ENCODE measurements at regions of chr2 and their contacts with region 1.

Region 1: GRCh38 chr2:74391580-74392448 is 11.7 kb upstream of the DCTN1 start:
- DNase-seq: peak; percentile 92 to 96 (median 94)
- H3K4me3 ChIP-seq: peak overlapping the region; percentile 84 to 90
- H3K4me3 Mint-ChIP-seq: peak overlapping the region in 5 of 8 donors; percentile 96 to 99 (median 97)
- H3K27ac ChIP-seq: peak overlapping the region; percentile 88
- H3K27ac Mint-ChIP-seq: peak overlapping the region in 6 of 7 donors; percentile 99 to 100 (median 100)
- H3K4me1 ChIP-seq: peaks cover 27% of the 10 kb centered on the region
- H3K4me1 Mint-ChIP-seq: peaks cover 5 to 13% (median 6%) of the 10 kb centered on the region in 4 donors
- H3K27me3 ChIP-seq: no peaks in the 10 kb centered on the region
- H3K27me3 Mint-ChIP-seq: peaks cover 0 to 5% of the 10 kb centered on the region in 2 donors

Region 2: GRCh38 chr2:73071360-73072133 is 1320.3 kb before region 1 on chr2 and contains the start of gene SFXN5:
- CTCF ChIA-PET with region 1: no interaction called
- POLR2A ChIA-PET with region 1: no interaction called
- intact Hi-C with region 1: loop called (anchors 5 kb)
- DNase-seq: peak; percentile 90 to 95 (median 90)
- H3K4me3 ChIP-seq: peak within 1 kb of the TSS; percentile 88 to 90
- H3K4me3 Mint-ChIP-seq: peak within 1 kb of the TSS; percentile 91 to 96 (median 94)
- H3K27ac ChIP-seq: peak within 1 kb of the TSS; percentile 65
- H3K27ac Mint-ChIP-seq: peak within 1 kb of the TSS; percentile 91 to 97 (median 93)
- H3K4me1 ChIP-seq: peaks cover 14% of the 10 kb centered on the region
- H3K4me1 Mint-ChIP-seq: peaks cover 17 to 47% (median 20%) of the 10 kb centered on the region in 4 donors
- H3K27me3 ChIP-seq: no peaks in the 10 kb centered on the region
- H3K27me3 Mint-ChIP-seq: peaks cover 0 to 1% of the 10 kb centered on the region in 2 donors
- total RNA-seq, gene SFXN5: 6.5 to 10.0 TPM

Region 3: DNA sequence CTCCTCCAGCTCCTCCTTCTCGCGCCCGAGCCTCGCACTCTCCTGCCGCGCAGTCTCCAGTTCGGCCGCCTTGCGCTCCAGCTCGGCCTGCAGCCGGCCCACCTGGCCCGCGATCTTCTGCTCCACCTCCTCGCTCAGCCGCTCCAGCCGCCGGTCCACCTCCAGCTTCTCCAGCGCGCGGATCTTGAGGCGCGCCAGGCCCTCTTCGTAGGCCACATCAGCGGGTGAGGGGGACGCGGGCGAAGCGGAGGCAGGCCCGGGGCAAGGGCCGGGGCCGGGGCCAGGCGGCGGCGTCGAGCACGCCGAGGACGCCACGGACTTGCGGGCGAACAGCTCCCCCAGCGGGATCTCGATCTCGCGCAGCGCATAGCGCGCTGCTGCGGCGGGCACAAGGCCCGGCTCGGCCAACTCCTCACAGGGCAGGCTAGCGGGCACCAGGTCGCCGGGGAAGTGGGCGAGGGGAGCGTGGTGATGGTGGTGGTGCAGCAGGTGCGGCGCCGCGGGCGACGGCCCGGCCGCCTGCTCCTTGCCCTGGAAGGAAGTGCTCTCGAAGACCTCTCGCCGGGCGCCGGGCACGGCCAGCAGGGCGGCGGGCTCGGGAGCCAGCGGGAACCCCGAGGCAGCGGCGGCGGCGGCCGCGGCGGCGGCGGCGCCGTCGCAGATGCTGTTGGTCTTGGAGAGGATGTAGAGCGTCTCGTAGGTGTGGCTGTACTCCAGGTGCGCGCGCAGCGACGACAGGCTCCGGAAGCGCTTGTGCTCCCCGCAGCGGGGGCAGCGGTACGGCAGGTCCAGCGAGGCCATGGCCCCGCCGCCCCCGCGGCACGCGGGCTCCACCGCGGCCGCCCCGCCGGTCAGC is 1122.8 kb before region 1 on chr2:
- CTCF ChIA-PET with region 1: no interaction called
- POLR2A ChIA-PET with region 1: no interaction called
- intact Hi-C with region 1: no loop called
- DNase-seq: peak; percentile 77 to 82 (median 80)
- H3K4me3 ChIP-seq: peak overlapping the region in 1 of 2 donors; percentile 45
- H3K4me3 Mint-ChIP-seq: peak overlapping the region in 7 of 8 donors; percentile 25 to 70 (median 67)
- H3K27ac ChIP-seq: peak overlapping the region; percentile 46
- H3K27ac Mint-ChIP-seq: no peak overlapping the region
- H3K4me1 ChIP-seq: peaks cover 24% of the 10 kb centered on the region
- H3K4me1 Mint-ChIP-seq: peaks cover 18 to 27% (median 23%) of the 10 kb centered on the region in 4 donors
- H3K27me3 ChIP-seq: no peaks in the 10 kb centered on the region
- H3K27me3 Mint-ChIP-seq: no peaks in the 10 kb centered on the region

Region 4: GRCh38 chr2:73828818-73829570 is 562.8 kb before region 1 on chr2 and contains the start of gene STAMBP:
- CTCF ChIA-PET with region 1: interaction called, 4 read pairs
- POLR2A ChIA-PET with region 1: interaction called, 4 read pairs
- intact Hi-C with region 1: loop called (anchors 1 kb)
- DNase-seq: peak; percentile 87 to 95 (median 91)
- H3K4me3 ChIP-seq: peak within 1 kb of the TSS; percentile 64 to 81
- H3K4me3 Mint-ChIP-seq: peak within 1 kb of the TSS; percentile 91 to 99 (median 96)
- H3K27ac ChIP-seq: peak within 1 kb of the TSS; percentile 92
- H3K27ac Mint-ChIP-seq: peak within 1 kb of the TSS; percentile 94 to 100 (median 98)
- H3K4me1 ChIP-seq: peaks cover 45% of the 10 kb centered on the region
- H3K4me1 Mint-ChIP-seq: peaks cover 34 to 49% (median 40%) of the 10 kb centered on the region in 4 donors
- H3K27me3 ChIP-seq: no peaks in the 10 kb centered on the region
- H3K27me3 Mint-ChIP-seq: no peaks in the 10 kb centered on the region
- total RNA-seq, gene STAMBP: 34.8 to 37.3 TPM

Region 5: DNA sequence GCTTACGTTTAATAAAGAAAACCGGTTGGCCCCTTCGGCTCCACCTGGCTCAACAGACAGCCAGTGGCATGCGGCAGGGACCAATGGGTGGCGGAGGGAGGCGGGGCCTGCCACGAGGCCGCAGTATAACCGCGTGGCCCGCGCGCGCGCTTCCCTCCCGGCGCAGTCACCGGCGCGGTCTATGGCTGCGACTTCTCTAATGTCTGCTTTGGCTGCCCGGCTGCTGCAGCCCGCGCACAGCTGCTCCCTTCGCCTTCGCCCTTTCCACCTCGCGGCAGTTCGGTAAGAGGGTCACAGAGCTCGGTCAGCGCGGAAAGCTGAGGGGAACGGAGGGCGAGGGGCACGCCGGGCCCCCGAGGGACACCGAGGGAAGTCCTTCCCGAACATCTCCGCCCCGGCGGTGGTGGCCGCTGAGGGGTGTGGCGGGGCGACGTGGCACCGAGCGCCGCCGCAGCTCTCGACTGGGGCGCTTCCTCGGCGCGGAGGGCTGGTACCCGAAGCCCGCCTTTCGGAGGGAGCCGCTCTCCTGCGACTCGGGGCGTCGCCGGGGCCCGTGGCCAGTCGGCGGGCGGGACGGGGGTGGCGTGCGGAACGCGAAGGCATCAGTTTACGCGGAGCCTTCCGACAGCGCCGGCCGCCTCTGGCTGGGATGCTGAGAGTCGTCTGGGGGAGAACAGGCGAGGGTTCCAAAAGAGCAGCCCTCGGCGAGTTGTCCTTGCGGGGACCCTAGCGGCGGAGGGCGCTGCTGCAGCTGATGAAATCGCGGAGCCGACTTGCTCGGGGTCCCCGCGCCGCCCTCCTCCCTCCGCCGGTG is 193.1 kb before region 1 on chr2 and contains the start of gene MTHFD2:
- CTCF ChIA-PET with region 1: interaction called, 4 read pairs
- POLR2A ChIA-PET with region 1: no interaction called
- intact Hi-C with region 1: loop called (anchors 10 kb)
- DNase-seq: peak; percentile 84 to 89 (median 86)
- H3K4me3 ChIP-seq: peak within 1 kb of the TSS; percentile 85 to 91
- H3K4me3 Mint-ChIP-seq: peak within 1 kb of the TSS; percentile 94 to 100 (median 98)
- H3K27ac ChIP-seq: peak within 1 kb of the TSS; percentile 86
- H3K27ac Mint-ChIP-seq: peak within 1 kb of the TSS; percentile 89 to 100 (median 99)
- H3K4me1 ChIP-seq: peaks cover 35% of the 10 kb centered on the region
- H3K4me1 Mint-ChIP-seq: peaks cover 20 to 41% (median 31%) of the 10 kb centered on the region in 4 donors
- H3K27me3 ChIP-seq: no peaks in the 10 kb centered on the region
- H3K27me3 Mint-ChIP-seq: no peaks in the 10 kb centered on the region
- total RNA-seq, gene MTHFD2: 23.8 to 25.0 TPM

Region 6: GRCh38 chr2:74238879-74239278 is 152.9 kb before region 1 on chr2:
- CTCF ChIA-PET with region 1: no interaction called
- POLR2A ChIA-PET with region 1: no interaction called
- intact Hi-C with region 1: no loop called
- DNase-seq: no peak
- H3K4me3 ChIP-seq: no peak overlapping the region
- H3K4me3 Mint-ChIP-seq: no peak overlapping the region
- H3K27ac ChIP-seq: no peak overlapping the region
- H3K27ac Mint-ChIP-seq: no peak overlapping the region
- H3K4me1 ChIP-seq: no peaks in the 10 kb centered on the region
- H3K4me1 Mint-ChIP-seq: peaks cover 0 to 2% (median 0%) of the 10 kb centered on the region in 4 donors
- H3K27me3 ChIP-seq: no peaks in the 10 kb centered on the region
- H3K27me3 Mint-ChIP-seq: no peaks in the 10 kb centered on the region

Region 7: GRCh38 chr2:74267068-74267467 is 124.7 kb before region 1 on chr2:
- CTCF ChIA-PET with region 1: interaction called, 8 read pairs
- POLR2A ChIA-PET with region 1: interaction called, 3 read pairs
- intact Hi-C with region 1: loop called (anchors 5 kb)
- DNase-seq: peak; percentile 66 to 73 (median 70)
- H3K4me3 ChIP-seq: no peak overlapping the region
- H3K4me3 Mint-ChIP-seq: peak overlapping the region; percentile 11 to 77 (median 65)
- H3K27ac ChIP-seq: no peak overlapping the region
- H3K27ac Mint-ChIP-seq: peak overlapping the region in 6 of 7 donors; percentile 14 to 81 (median 70)
- H3K4me1 ChIP-seq: peaks cover 20% of the 10 kb centered on the region
- H3K4me1 Mint-ChIP-seq: peaks cover 14 to 23% (median 18%) of the 10 kb centered on the region in 4 donors
- H3K27me3 ChIP-seq: no peaks in the 10 kb centered on the region
- H3K27me3 Mint-ChIP-seq: no peaks in the 10 kb centered on the region

Region 8: DNA sequence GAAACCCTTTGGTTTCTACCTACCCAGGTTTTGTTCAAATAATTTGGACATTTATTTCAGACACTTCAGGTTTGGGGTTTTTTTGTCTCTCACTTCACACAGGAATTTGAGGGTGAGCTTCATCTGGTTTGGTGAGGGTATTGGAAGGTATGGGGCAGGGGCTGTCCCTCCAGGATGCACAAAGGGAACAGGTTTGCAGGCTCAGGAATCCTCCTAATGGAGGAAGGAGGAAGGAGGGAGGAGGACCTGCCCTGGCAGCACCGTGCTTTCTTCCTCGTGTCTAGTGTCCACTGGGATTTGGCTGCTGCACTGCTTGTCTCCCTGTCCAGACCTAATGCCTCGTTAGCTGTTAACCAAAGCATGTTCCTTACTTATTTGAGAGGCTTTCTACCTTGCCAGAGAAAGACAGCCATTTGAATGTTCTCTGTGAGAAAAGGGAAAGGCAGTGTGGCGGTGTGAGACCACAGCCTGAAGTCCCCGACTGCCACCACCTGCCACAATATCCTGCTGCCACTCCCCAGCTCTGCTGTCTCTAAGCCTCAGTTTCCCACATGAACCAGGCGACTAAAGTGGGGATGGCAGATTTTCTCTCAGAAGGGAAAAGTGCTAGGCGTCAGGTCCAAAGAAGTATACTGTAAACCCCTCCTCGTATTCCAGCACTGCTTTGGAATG is 46.4 kb before region 1 on chr2:
- CTCF ChIA-PET with region 1: no interaction called
- POLR2A ChIA-PET with region 1: no interaction called
- intact Hi-C with region 1: no loop called
- DNase-seq: no peak
- H3K4me3 ChIP-seq: no peak overlapping the region
- H3K4me3 Mint-ChIP-seq: no peak overlapping the region
- H3K27ac ChIP-seq: no peak overlapping the region
- H3K27ac Mint-ChIP-seq: peak overlapping the region in 1 of 7 donors; percentile 77
- H3K4me1 ChIP-seq: no peaks in the 10 kb centered on the region
- H3K4me1 Mint-ChIP-seq: no peaks in the 10 kb centered on the region
- H3K27me3 ChIP-seq: no peaks in the 10 kb centered on the region
- H3K27me3 Mint-ChIP-seq: no peaks in the 10 kb centered on the region

Region 9: DNA sequence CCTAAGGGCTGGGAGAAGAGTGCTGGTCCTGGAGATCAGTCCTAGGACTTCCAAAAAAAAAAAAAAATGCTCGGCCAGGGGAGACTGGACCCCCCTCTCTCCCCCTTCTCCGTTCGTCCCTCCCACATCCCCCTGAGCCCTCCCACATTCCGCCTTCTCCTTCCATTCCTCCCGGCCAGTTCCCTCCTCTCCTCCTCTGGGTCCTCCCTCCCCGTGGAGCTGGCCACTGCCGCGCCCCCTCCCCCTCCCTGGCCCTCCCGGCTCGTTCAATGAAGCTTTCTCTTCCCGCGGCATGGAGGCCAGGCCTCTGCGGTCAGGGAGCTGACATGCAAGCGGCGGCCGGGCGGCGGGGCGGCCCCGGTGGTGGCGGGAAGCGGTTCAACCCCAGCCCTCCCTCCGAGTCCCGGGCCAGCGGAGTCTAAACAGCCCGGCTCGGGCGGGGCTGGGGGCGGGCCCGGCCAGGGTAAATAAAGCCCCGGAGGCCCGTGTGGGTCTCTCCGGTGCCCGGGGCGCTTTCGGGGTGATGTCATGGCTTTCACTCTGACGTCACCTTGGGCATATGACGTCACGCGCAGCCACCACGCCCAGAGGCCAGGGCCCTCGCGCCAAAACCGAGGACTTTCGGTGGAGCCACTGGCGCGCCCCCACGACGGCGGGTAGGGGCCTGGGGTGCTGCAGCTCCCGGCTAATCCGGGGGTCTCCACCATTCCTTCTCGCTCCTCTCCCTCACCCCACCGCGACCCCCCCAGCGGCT is 162.3 kb after region 1 on chr2 and contains the start of gene LOXL3:
- CTCF ChIA-PET with region 1: no interaction called
- POLR2A ChIA-PET with region 1: interaction called, 4 read pairs
- intact Hi-C with region 1: loop called (anchors 10 kb)
- DNase-seq: peak; percentile 79 to 84 (median 82)
- H3K4me3 ChIP-seq: peak within 1 kb of the TSS; percentile 84 to 99
- H3K4me3 Mint-ChIP-seq: peak within 1 kb of the TSS; percentile 94 to 98 (median 96)
- H3K27ac ChIP-seq: peak within 1 kb of the TSS; percentile 64
- H3K27ac Mint-ChIP-seq: peak within 1 kb of the TSS; percentile 73 to 98 (median 93)
- H3K4me1 ChIP-seq: peaks cover 23% of the 10 kb centered on the region
- H3K4me1 Mint-ChIP-seq: peaks cover 7 to 35% (median 19%) of the 10 kb centered on the region in 4 donors
- H3K27me3 ChIP-seq: peaks cover 16% of the 10 kb centered on the region
- H3K27me3 Mint-ChIP-seq: peaks cover 11 to 25% of the 10 kb centered on the region in 2 donors
- total RNA-seq, gene LOXL3: 0.25 to 0.32 TPM

Region 10: DNA sequence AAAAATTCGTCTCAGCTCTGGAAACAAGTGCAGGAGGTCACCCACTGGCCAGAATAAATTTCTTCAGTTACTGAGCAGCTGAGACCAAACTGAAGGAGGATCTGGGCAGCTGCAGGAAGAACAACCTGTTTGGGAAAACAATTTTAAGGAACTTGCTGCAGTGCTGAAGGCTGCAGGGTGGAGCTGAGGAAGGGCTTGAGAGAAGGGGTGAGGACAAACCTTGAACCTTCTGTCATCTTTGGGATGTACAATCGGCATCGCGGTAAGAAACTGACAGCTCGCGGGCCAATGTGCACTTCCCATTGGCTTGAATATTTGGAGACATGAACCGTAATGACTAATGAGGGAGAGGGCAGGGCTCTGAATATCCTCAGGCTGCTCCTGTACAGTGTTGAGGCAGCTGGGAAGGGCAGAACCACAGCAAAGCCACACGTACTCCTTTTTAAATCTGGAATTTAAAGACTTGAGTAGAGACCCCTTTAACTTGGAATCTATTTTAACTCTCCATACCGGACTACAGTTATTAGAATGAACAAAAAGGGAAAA is 717.2 kb after region 1 on chr2:
- CTCF ChIA-PET with region 1: no interaction called
- POLR2A ChIA-PET with region 1: no interaction called
- intact Hi-C with region 1: no loop called
- DNase-seq: no peak
- H3K4me3 ChIP-seq: no peak overlapping the region
- H3K4me3 Mint-ChIP-seq: no peak overlapping the region
- H3K27ac ChIP-seq: no peak overlapping the region
- H3K27ac Mint-ChIP-seq: no peak overlapping the region
- H3K4me1 ChIP-seq: no peaks in the 10 kb centered on the region
- H3K4me1 Mint-ChIP-seq: no peaks in the 10 kb centered on the region
- H3K27me3 ChIP-seq: no peaks in the 10 kb centered on the region
- H3K27me3 Mint-ChIP-seq: peaks cover 0 to 1% of the 10 kb centered on the region in 2 donors

Measured in CD4-positive, alpha-beta memory T cell (primary cell).